ENCODE measurements at regions of chr2 and their contacts with region 1.

Region 1: DNA sequence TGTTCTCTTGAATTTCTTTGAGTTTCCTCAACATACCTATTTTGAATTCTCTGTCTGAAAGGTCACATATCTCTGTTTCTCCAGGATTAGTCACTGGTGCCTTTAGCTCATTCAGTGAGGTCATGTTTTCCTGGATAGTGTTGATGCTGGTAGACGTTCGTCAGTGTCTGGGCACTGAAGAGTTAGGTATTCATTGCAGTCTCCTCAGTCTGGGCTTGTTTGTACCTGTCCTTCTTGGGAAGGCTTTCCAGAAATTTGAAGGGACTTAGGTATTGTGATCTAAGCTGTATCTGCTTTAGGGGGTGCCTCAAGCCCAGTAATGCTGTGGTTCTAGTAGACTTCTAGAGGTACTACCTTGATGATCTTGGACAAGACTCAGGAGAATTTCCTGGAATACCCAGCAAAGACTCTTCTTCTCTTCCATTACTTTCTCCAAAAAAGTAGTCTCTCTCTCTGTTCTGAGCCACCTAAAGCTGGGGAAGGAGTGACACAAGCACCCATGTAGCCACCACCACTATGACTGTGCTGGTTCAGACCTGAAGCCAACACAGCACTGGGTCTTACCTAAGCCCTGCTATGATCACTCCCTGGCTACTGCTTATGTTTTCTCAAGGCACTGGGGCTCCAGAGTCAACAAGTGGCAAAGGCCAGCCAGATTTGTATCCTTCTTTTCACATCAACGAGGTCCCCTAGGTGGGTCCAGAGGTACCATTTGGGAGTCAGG is 852.0 kb downstream of the BCL11A start:
- DNase-seq: no peak
- ATAC-seq: no peak
- H3K4me3 ChIP-seq: no peak overlapping the region
- H3K27ac ChIP-seq: no peak overlapping the region
- H3K4me1 ChIP-seq: no peaks in the 10 kb centered on the region
- H3K27me3 ChIP-seq: no peaks in the 10 kb centered on the region
- CTCF ChIP-seq: no peak
- POLR2A ChIP-seq: no peak
- RAD21 ChIP-seq: no peak

Region 2: DNA sequence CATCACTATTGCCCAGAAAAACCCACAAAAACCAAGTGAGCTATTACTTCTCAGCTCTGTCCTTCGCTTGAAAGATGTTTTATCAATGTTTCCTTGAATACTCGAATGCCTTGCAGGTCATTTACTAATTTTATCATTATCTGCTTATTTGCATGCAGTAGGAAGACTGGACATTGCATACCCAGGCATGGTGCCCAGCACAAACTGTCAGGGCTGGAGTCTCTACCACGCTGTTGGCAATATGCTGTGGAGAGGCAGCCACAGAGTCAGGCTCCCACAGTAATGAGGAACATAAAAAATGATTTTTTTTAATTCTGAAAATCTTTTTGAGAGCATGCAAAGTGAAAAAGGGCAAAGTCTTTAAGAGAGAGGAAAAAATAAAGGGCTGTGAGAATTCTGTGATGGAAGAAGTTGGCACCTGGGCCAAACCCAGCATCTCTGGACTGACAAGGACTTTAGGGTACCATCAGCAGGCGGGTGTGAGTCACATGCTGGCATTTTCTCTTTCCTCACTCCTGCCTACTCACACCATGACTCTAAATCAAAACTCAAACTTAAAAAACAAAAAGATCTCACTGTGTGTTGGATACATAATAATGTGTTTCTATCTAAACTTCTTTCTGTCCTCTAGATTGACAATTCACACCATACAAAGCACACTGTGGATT is 750.5 kb before region 1 on chr2:
- CTCF ChIA-PET with region 1: no interaction called
- POLR2A ChIA-PET with region 1: no interaction called
- RAD21 ChIA-PET with region 1: no interaction called
- intact Hi-C with region 1: loop called (anchors 5 kb)
- DNase-seq: no peak
- ATAC-seq: no peak
- H3K4me3 ChIP-seq: no peak overlapping the region
- H3K27ac ChIP-seq: no peak overlapping the region
- H3K4me1 ChIP-seq: no peaks in the 10 kb centered on the region
- H3K27me3 ChIP-seq: peaks cover 15% of the 10 kb centered on the region
- CTCF ChIP-seq: no peak
- POLR2A ChIP-seq: no peak
- RAD21 ChIP-seq: no peak

Region 3: DNA sequence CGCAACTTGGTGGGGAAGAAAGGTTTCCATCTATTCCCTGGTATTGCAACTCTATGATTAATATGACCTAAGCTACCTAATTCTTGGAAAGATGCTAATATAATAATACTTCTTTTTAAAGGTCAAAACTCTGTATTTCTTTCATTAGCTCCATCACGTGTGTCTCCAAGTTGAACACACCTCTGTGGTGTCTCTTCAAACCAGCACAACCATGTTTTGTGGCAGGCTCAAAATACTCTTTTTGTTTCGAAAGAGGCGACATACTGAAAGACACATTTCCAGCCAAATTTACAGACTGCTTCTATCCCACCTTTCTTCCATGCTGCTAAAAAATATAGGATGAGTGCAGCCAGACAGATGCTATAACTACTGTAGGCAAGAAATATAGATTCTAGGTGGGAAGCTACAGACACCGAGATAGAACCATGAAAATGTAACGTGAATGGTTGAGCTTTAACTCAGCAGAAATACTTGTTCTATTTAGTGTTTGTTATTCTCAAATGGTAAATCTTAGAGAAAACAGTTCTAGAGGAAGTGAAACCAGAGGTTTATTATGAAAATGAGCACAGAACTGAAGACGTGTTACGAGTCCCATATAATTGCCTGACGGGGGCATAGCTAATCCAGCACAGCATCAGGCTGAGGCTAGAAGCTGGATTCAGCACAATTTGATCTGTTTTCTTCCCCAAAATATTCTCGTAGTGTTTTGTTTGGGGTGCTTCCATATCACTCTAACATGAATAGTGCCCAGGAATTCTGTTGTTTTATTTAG is 468.9 kb before region 1 on chr2:
- CTCF ChIA-PET with region 1: no interaction called
- POLR2A ChIA-PET with region 1: no interaction called
- RAD21 ChIA-PET with region 1: no interaction called
- intact Hi-C with region 1: no loop called
- DNase-seq: no peak
- ATAC-seq: no peak
- H3K4me3 ChIP-seq: no peak overlapping the region
- H3K27ac ChIP-seq: no peak overlapping the region
- H3K4me1 ChIP-seq: no peaks in the 10 kb centered on the region
- H3K27me3 ChIP-seq: no peaks in the 10 kb centered on the region
- CTCF ChIP-seq: no peak
- POLR2A ChIP-seq: no peak
- RAD21 ChIP-seq: no peak

Measured in HCT116 (cell line).